CD4-positive, alpha-beta memory T cell (primary cell): ENCODE measurements at regions of chr16 and their contacts with region 1.

Region 1: DNA sequence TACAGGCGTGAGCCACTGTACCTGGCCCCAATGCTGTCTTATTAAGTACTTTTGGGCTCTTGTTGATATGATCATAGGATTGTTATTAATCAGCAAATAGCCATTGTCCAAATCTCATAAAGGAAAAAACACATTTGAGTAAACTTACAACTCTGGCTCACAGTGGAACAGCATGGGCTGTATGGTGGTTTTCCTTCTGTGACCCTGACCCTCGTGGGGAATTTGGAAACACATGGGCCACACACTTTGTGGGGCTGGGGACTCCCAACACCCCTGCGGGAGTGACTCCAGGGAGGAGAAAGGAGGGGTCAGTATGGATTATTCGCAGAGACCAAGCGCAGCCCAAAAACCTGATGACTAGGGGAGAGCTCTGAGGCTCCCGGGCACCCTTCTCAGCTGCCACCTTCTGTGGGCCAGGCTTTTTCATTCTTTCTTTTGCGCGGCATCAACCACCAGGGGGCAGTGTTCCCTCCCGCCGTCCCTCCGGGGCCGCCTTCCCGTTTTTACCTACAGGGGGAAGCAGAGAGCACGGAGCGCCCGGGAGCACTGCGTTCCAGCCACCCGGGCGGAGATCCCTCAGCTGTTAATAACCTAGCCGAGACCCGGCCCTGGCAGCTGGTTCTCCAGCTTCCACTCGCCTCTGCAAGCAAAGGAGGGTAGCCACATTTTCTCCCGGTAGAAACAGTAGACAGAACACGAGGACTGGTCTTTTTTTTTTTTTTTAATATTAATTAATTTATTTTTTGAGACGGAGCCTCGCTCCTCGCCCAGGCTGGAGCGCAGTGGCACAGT is 9.7 kb downstream of the TSNAXIP1 start:
- DNase-seq: peak; percentile 83 to 92 (median 85)
- H3K4me3 ChIP-seq: no peak overlapping the region
- H3K4me3 Mint-ChIP-seq: peak overlapping the region in 1 of 8 donors; percentile 61
- H3K27ac ChIP-seq: no peak overlapping the region
- H3K27ac Mint-ChIP-seq: peak overlapping the region in 4 of 7 donors; percentile 75 to 92 (median 82)
- H3K4me1 ChIP-seq: no peaks in the 10 kb centered on the region
- H3K4me1 Mint-ChIP-seq: peaks cover 0 to 8% (median 5%) of the 10 kb centered on the region in 4 donors
- H3K27me3 ChIP-seq: no peaks in the 10 kb centered on the region
- H3K27me3 Mint-ChIP-seq: no peaks in the 10 kb centered on the region

Region 2: GRCh38 chr16:67833418-67834241 is 17.2 kb after region 1 on chr16:
- CTCF ChIA-PET with region 1: interaction called, 25 read pairs
- POLR2A ChIA-PET with region 1: interaction called, 8 read pairs
- intact Hi-C with region 1: no loop called
- DNase-seq: peak; percentile 90 to 94 (median 91)
- H3K4me3 ChIP-seq: peak overlapping the region; percentile 53 to 74
- H3K4me3 Mint-ChIP-seq: peak overlapping the region; percentile 87 to 95 (median 91)
- H3K27ac ChIP-seq: peak overlapping the region; percentile 60
- H3K27ac Mint-ChIP-seq: peak overlapping the region; percentile 80 to 91 (median 85)
- H3K4me1 ChIP-seq: peaks cover 16% of the 10 kb centered on the region
- H3K4me1 Mint-ChIP-seq: peaks cover 10 to 21% (median 15%) of the 10 kb centered on the region in 4 donors
- H3K27me3 ChIP-seq: no peaks in the 10 kb centered on the region
- H3K27me3 Mint-ChIP-seq: no peaks in the 10 kb centered on the region

Region 3: DNA sequence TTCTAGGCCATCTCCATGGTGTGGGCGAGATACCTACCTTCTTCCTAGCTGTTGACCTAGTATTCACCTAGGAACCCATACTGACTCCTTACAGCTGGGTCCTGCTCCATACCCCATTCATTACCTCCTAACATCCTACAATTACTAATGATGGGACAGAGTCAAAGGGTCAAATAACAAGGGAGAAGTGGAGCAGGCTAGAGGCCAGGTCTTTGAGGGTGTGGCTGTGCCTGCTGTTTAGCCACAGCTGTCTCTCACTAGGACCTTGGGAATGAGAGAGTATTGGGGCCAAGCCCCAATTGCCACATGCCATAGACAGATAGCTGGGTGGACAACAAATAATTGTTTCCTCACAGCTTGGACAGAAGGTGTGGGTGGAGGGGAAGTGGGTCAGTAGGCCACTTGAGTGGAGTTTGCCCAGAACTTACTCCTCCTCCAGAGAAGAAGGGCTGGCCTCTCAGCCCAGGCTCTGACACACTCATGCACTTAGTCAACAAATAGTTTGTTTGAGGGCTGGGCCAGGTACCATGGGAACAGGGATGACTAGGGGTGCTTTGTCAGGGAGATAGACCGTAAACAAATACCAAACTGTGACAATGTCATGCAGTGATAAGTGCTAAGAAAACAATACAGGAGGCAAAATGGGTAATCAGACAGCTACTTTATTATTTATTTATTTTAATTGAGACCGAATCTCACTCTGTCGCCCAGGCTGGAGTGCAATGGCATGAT is 41.2 kb after region 1 on chr16:
- CTCF ChIA-PET with region 1: interaction called, 46 read pairs
- POLR2A ChIA-PET with region 1: no interaction called
- intact Hi-C with region 1: no loop called
- DNase-seq: peak; percentile 34 to 84 (median 54)
- H3K4me3 ChIP-seq: no peak overlapping the region
- H3K4me3 Mint-ChIP-seq: peak overlapping the region in 2 of 8 donors; percentile 16 to 57
- H3K27ac ChIP-seq: peak overlapping the region; percentile 43
- H3K27ac Mint-ChIP-seq: peak overlapping the region in 6 of 7 donors; percentile 77 to 95 (median 92)
- H3K4me1 ChIP-seq: peaks cover 24% of the 10 kb centered on the region
- H3K4me1 Mint-ChIP-seq: peaks cover 24 to 56% (median 37%) of the 10 kb centered on the region in 4 donors
- H3K27me3 ChIP-seq: no peaks in the 10 kb centered on the region
- H3K27me3 Mint-ChIP-seq: no peaks in the 10 kb centered on the region

Region 4: GRCh38 chr16:67883872-67884261 is 67.4 kb after region 1 on chr16:
- CTCF ChIA-PET with region 1: interaction called, 21 read pairs
- POLR2A ChIA-PET with region 1: no interaction called
- intact Hi-C with region 1: no loop called
- DNase-seq: peak; percentile 68 to 75 (median 71)
- H3K4me3 ChIP-seq: no peak overlapping the region
- H3K4me3 Mint-ChIP-seq: no peak overlapping the region
- H3K27ac ChIP-seq: no peak overlapping the region
- H3K27ac Mint-ChIP-seq: peak overlapping the region in 4 of 7 donors; percentile 22 to 83 (median 40)
- H3K4me1 ChIP-seq: no peaks in the 10 kb centered on the region
- H3K4me1 Mint-ChIP-seq: peaks cover 0 to 1% (median 0%) of the 10 kb centered on the region in 4 donors
- H3K27me3 ChIP-seq: no peaks in the 10 kb centered on the region
- H3K27me3 Mint-ChIP-seq: no peaks in the 10 kb centered on the region

Region 5: GRCh38 chr16:68064791-68065365 is 248.4 kb after region 1 on chr16:
- CTCF ChIA-PET with region 1: interaction called, 11 read pairs
- POLR2A ChIA-PET with region 1: no interaction called
- intact Hi-C with region 1: loop called (anchors 1 kb)
- DNase-seq: peak; percentile 60 to 78 (median 68)
- H3K4me3 ChIP-seq: no peak overlapping the region
- H3K4me3 Mint-ChIP-seq: peak overlapping the region in 6 of 8 donors; percentile 1 to 74 (median 34)
- H3K27ac ChIP-seq: peak overlapping the region; percentile 42
- H3K27ac Mint-ChIP-seq: peak overlapping the region; percentile 79 to 96 (median 84)
- H3K4me1 ChIP-seq: peaks cover 79% of the 10 kb centered on the region
- H3K4me1 Mint-ChIP-seq: peaks cover 51 to 90% (median 71%) of the 10 kb centered on the region in 4 donors
- H3K27me3 ChIP-seq: no peaks in the 10 kb centered on the region
- H3K27me3 Mint-ChIP-seq: no peaks in the 10 kb centered on the region

Region 6: GRCh38 chr16:68490829-68491575 is 674.6 kb after region 1 on chr16:
- CTCF ChIA-PET with region 1: no interaction called
- POLR2A ChIA-PET with region 1: no interaction called
- intact Hi-C with region 1: no loop called
- DNase-seq: no peak
- H3K4me3 ChIP-seq: no peak overlapping the region
- H3K4me3 Mint-ChIP-seq: no peak overlapping the region
- H3K27ac ChIP-seq: no peak overlapping the region
- H3K27ac Mint-ChIP-seq: no peak overlapping the region
- H3K4me1 ChIP-seq: no peaks in the 10 kb centered on the region
- H3K4me1 Mint-ChIP-seq: peaks cover 0 to 4% (median 0%) of the 10 kb centered on the region in 4 donors
- H3K27me3 ChIP-seq: no peaks in the 10 kb centered on the region
- H3K27me3 Mint-ChIP-seq: peaks cover 0 to 1% of the 10 kb centered on the region in 2 donors